ENCODE measurements at regions of chr4 and their contacts with region 1.

Region 1: DNA sequence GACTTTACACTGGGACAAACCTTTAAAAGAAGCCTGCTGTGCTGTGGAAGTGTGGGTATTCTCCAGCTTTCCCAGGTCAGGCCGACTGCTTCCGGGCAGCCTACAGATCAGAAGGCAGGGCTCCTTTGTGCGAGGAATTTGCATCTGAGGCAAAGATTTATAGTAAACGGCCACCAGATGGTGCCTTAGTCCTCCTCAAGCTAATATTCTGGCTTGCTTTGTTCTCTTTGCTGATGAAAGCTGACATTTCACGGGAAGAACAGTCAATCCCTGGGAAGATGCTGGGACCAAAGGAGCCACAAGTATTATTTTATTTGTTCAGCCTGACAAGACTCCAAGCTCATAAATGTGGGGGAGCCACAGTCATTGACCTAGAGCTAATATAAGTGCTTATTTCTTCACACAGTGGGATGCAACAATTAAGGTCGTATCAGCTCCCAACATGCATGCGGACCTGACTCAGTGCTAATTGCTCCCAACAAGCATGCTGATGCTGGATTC is 120.7 kb upstream of the TRIM2 start:
- DNase-seq: peak; percentile 64
- ATAC-seq: peak; percentile 52
- H3K4me3 Mint-ChIP-seq: no peak overlapping the region
- H3K27ac Mint-ChIP-seq: no peak overlapping the region
- H3K4me1 Mint-ChIP-seq: peaks cover 29% of the 10 kb centered on the region
- H3K27me3 Mint-ChIP-seq: peaks cover 4% of the 10 kb centered on the region

Region 2: DNA sequence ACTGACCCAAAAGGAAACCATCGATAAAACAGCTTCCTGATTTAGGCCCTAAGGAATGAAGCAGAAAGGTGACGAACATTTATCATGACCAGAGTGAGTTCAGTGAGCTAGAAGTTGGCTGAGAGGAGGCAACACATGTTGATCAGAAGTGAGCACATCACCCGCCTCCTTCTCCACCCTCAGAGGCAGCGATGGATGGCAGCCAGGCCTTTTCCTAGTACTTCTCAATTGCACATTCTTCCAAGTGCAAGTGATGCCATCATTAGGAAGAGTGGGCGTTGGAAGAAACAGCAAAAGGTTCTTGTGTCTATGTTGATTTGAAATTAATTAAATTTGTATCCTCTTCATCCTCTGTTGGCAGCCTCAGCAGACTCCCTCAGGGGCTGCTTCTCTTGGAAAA is 455.4 kb before region 1 on chr4:
- CTCF ChIA-PET with region 1: no interaction called
- POLR2A ChIA-PET with region 1: no interaction called
- intact Hi-C with region 1: no loop called
- DNase-seq: no peak
- ATAC-seq: no peak
- H3K4me3 Mint-ChIP-seq: no peak overlapping the region
- H3K27ac Mint-ChIP-seq: no peak overlapping the region
- H3K4me1 Mint-ChIP-seq: no peaks in the 10 kb centered on the region
- H3K27me3 Mint-ChIP-seq: no peaks in the 10 kb centered on the region

Region 3: DNA sequence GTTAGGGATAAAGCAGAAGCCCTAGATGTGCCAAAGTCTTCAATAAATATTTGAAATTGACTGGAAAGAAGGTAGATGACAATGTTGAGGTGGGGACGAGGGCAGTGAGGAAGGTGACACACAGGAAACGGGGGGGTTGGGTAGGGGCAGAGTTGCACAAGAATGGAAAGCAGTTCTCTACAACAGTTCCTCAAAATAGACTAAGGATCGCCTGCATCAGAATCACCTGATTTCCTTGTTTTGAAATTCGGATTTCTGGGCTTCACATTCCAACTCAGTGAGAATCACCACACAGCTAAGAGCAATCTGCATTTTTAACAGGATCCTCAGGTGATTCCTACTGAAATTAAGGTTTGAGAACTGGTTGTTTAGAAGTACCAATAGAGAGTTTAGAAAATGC is 233.1 kb before region 1 on chr4:
- CTCF ChIA-PET with region 1: interaction called, 34 read pairs
- POLR2A ChIA-PET with region 1: no interaction called
- intact Hi-C with region 1: loop called (anchors 1 kb)
- DNase-seq: peak; percentile 64
- ATAC-seq: peak; percentile 69
- H3K4me3 Mint-ChIP-seq: no peak overlapping the region
- H3K27ac Mint-ChIP-seq: peak overlapping the region; percentile 40
- H3K4me1 Mint-ChIP-seq: peaks cover 22% of the 10 kb centered on the region
- H3K27me3 Mint-ChIP-seq: no peaks in the 10 kb centered on the region

Region 4: GRCh38 chr4:153095448-153096204 is 12.1 kb after region 1 on chr4:
- CTCF ChIA-PET with region 1: interaction called, 10 read pairs
- POLR2A ChIA-PET with region 1: no interaction called
- intact Hi-C with region 1: no loop called
- DNase-seq: no peak
- ATAC-seq: no peak
- H3K4me3 Mint-ChIP-seq: no peak overlapping the region
- H3K27ac Mint-ChIP-seq: no peak overlapping the region
- H3K4me1 Mint-ChIP-seq: peaks cover 4% of the 10 kb centered on the region
- H3K27me3 Mint-ChIP-seq: no peaks in the 10 kb centered on the region

Region 5: DNA sequence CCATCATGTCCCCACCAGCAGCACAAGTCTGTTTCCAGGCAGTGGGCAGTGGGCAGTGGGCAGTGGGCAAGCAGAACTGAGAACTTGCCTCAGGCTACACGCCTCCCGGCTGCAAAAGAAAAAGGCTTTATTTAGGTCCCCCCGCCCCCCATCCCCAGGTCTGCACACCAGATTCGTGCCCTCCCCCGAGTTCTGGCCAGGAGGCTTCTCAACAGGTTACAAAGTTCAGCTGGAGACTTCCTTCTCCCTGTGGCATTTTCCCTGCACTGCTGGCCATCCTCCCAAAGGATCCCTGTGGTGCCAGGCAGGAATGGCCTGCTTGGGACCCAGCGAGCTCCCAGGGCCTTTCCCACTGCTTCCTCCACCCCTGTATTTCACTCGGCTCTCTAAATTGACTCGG is 23.7 kb after region 1 on chr4:
- CTCF ChIA-PET with region 1: interaction called, 108 read pairs
- POLR2A ChIA-PET with region 1: no interaction called
- intact Hi-C with region 1: no loop called
- DNase-seq: no peak
- ATAC-seq: no peak
- H3K4me3 Mint-ChIP-seq: no peak overlapping the region
- H3K27ac Mint-ChIP-seq: no peak overlapping the region
- H3K4me1 Mint-ChIP-seq: peaks cover 3% of the 10 kb centered on the region
- H3K27me3 Mint-ChIP-seq: no peaks in the 10 kb centered on the region

Region 6: GRCh38 chr4:153115322-153116290 is 32.1 kb after region 1 on chr4:
- CTCF ChIA-PET with region 1: interaction called, 108 read pairs
- POLR2A ChIA-PET with region 1: interaction called, 4 read pairs
- intact Hi-C with region 1: no loop called
- DNase-seq: peak; percentile 87
- ATAC-seq: peak; percentile 59
- H3K4me3 Mint-ChIP-seq: no peak overlapping the region
- H3K27ac Mint-ChIP-seq: no peak overlapping the region
- H3K4me1 Mint-ChIP-seq: peaks cover 2% of the 10 kb centered on the region
- H3K27me3 Mint-ChIP-seq: no peaks in the 10 kb centered on the region

Region 7: GRCh38 chr4:153318696-153319320 is 235.3 kb after region 1 on chr4:
- CTCF ChIA-PET with region 1: interaction called, 4 read pairs
- POLR2A ChIA-PET with region 1: no interaction called
- intact Hi-C with region 1: loop called (anchors 2 to 5 kb)
- DNase-seq: peak; percentile 40
- ATAC-seq: peak; percentile 58
- H3K4me3 Mint-ChIP-seq: no peak overlapping the region
- H3K27ac Mint-ChIP-seq: no peak overlapping the region
- H3K4me1 Mint-ChIP-seq: no peaks in the 10 kb centered on the region
- H3K27me3 Mint-ChIP-seq: no peaks in the 10 kb centered on the region

Region 8: GRCh38 chr4:153643406-153644383 is 560.2 kb after region 1 on chr4:
- CTCF ChIA-PET with region 1: interaction called, 5 read pairs
- POLR2A ChIA-PET with region 1: no interaction called
- intact Hi-C with region 1: loop called in 1 of 2 experiments (anchors 2 kb)
- DNase-seq: no peak
- ATAC-seq: peak; percentile 92
- H3K4me3 Mint-ChIP-seq: no peak overlapping the region
- H3K27ac Mint-ChIP-seq: no peak overlapping the region
- H3K4me1 Mint-ChIP-seq: peaks cover 23% of the 10 kb centered on the region
- H3K27me3 Mint-ChIP-seq: no peaks in the 10 kb centered on the region

Measured in activated CD4-positive, alpha-beta T cell treated with anti-CD3 and anti-CD28 coated beads for 36 hours (primary cell).